Endothelial cell of umbilical vein (primary cell): ENCODE measurements at regions of chr15 and their contacts with region 1.

Region 1: GRCh38 chr15:38828031-38828532 is 263.5 kb upstream of the RASGRP1 start:
- DNase-seq: peak; percentile 100
- H3K4me3 ChIP-seq: no peak overlapping the region
- H3K27ac ChIP-seq: peak overlapping the region; percentile 100
- H3K4me1 ChIP-seq: peaks cover 59% of the 10 kb centered on the region
- H3K27me3 ChIP-seq: no peaks in the 10 kb centered on the region
- CTCF ChIP-seq: no peak
- POLR2A ChIP-seq: peak; percentile 65

Region 2: DNA sequence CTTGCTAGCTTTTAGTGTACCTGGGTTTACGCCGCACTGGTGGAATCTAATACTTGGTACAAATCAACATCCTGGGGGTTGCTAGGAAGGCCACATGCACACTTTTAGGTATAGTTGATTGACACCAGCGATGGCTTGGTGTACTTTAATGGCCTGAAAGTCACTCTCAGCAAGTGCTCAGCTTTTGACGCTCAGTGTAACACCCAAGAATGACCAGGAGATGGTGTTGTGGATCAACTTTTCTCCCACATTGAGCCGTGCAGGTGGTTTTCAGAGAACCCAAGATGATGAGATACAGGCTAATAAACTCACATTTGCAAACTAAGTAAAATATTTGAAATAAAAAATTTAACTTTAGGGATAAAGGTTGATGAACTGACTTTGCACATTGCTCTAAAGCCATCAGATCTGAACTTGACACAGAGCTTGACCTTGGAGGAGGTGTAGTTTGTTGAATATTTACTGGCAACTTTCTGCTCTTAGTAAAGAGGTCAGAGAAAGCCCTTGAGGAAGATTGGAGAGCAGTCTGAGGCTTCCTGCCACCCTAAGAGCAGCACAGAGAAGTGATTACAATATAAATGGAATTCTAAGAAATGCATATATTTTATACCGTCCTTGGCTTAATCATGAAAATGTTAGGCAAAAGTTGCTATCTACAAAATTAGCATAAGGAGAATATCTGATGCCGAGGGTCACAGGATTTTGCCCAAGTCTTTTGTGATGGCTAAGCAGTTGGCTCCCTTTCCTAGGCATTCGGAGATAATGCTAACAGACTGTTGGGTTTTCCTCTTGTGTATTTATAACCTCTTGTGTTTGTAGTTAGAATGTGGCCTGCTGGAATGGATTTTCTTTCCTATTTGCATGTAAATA is 120.0 kb before region 1 on chr15:
- CTCF ChIA-PET with region 1: interaction called, 12 read pairs
- POLR2A ChIA-PET with region 1: no interaction called
- dilution Hi-C with region 1: no loop called
- intact Hi-C with region 1: loop called (anchors 1 kb)
- DNase-seq: peak; percentile 87
- H3K4me3 ChIP-seq: no peak overlapping the region
- H3K27ac ChIP-seq: no peak overlapping the region
- H3K4me1 ChIP-seq: peaks cover 10% of the 10 kb centered on the region
- H3K27me3 ChIP-seq: no peaks in the 10 kb centered on the region
- CTCF ChIP-seq: peak; percentile 71 to 78
- POLR2A ChIP-seq: no peak

Region 3: DNA sequence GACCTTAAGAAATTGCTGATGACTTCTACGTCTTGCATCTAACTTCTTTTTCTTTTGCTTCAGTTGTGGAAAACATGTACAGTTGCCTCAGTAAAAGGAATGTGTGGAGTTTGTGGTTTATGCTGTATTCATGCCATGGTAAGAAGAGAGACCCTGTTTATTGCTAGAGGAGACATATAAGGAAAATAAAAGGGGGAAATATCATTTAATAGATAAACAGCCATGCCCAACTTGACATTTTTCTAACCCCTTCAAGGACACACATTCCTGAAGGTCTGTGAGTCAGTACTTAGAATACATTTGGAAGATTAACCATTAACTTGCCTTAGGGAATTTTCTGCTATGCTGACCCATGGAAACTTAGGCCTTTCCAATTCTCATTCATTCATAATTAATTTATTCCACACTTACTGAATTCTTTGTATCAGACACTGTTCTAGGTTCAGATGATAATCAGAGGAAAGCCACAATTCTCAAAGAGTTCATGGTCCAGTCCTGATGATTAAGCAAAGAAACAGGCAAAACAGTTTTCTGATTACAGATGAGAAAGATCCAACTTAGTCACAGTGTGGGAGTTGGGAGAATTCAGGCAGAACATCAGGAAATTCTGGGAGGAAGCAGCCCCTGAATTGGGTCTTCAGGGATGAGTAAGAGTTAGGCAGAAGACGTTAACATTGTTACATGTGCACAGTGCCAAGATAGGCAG is 66.3 kb after region 1 on chr15:
- CTCF ChIA-PET with region 1: interaction called, 5 read pairs
- POLR2A ChIA-PET with region 1: interaction called, 4 read pairs
- dilution Hi-C with region 1: no loop called
- intact Hi-C with region 1: loop called (anchors 1 kb)
- DNase-seq: peak; percentile 91
- H3K4me3 ChIP-seq: no peak overlapping the region
- H3K27ac ChIP-seq: peak overlapping the region; percentile 92
- H3K4me1 ChIP-seq: peaks cover 49% of the 10 kb centered on the region
- H3K27me3 ChIP-seq: no peaks in the 10 kb centered on the region
- CTCF ChIP-seq: no peak
- POLR2A ChIP-seq: no peak

Region 4: DNA sequence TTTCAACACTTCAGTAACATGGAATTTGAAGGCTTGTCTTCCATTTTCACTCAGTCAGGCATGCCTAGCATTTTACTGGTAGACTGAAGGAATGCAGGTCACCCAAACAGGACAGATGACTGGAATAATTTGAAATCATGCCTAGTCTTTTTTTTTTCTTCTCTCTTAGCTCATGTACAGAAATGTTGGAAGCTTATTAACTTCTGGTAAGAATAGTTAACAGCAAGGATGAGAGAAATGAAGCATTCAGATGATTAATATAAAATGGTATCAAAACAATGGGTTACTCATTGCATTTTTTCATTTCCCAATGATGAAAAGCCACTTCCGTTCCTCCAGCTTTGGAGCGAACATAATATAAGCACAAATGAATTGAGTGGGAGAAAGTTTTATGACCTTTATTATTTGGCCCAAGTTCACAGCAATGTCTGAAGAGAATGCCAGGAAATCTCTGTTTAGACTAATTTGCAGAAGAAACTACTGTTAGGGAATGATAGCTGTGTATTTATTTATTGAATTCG is 168.1 kb after region 1 on chr15:
- CTCF ChIA-PET with region 1: interaction called, 40 read pairs
- POLR2A ChIA-PET with region 1: interaction called, 21 read pairs
- dilution Hi-C with region 1: no loop called
- intact Hi-C with region 1: loop called (anchors 1 kb)
- DNase-seq: peak; percentile 96
- H3K4me3 ChIP-seq: no peak overlapping the region
- H3K27ac ChIP-seq: peak overlapping the region; percentile 92
- H3K4me1 ChIP-seq: peaks cover 51% of the 10 kb centered on the region
- H3K27me3 ChIP-seq: no peaks in the 10 kb centered on the region
- CTCF ChIP-seq: no peak
- POLR2A ChIP-seq: peak; percentile 35

Region 5: GRCh38 chr15:39095218-39095879 is 267.3 kb after region 1 on chr15:
- CTCF ChIA-PET with region 1: no interaction called
- POLR2A ChIA-PET with region 1: no interaction called
- dilution Hi-C with region 1: no loop called
- intact Hi-C with region 1: no loop called
- DNase-seq: no peak
- H3K4me3 ChIP-seq: no peak overlapping the region
- H3K27ac ChIP-seq: no peak overlapping the region
- H3K4me1 ChIP-seq: no peaks in the 10 kb centered on the region
- H3K27me3 ChIP-seq: no peaks in the 10 kb centered on the region
- CTCF ChIP-seq: no peak
- POLR2A ChIP-seq: no peak

Region 6: DNA sequence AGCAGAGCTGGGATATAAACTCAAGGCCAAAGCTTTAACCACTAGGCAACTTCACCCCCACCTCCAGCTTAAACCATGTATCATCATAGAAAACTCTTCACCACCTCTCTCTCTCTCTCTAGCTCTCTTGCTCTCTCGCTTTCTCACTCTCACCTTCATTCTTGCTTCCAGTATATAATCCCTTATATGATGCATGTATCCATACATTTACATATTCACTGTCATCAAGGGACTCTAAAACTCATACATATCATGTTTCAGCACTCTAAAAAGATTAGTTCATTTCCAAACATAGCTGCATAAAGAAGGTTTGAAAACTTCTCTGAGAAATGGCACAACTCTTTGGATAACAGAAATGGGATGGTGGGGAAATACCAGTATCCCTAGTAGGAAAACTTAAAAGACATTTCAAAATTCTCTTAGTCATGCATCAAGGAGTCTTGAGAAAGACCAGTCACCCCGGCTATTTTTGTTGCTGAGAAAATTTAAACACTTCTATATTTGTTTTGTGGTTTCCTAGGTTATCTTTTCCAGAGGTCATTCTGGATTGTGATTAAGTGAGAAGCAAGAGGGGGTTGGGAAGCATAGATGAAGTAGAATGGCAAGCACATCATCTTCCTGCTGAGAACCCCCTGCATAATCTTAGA is 305.0 kb after region 1 on chr15:
- CTCF ChIA-PET with region 1: interaction called, 3 read pairs
- POLR2A ChIA-PET with region 1: interaction called, 11 read pairs
- dilution Hi-C with region 1: loop called (anchors 25 kb)
- intact Hi-C with region 1: loop called (anchors 1 kb)
- DNase-seq: peak; percentile 64
- H3K4me3 ChIP-seq: no peak overlapping the region
- H3K27ac ChIP-seq: peak overlapping the region; percentile 48
- H3K4me1 ChIP-seq: peaks cover 53% of the 10 kb centered on the region
- H3K27me3 ChIP-seq: no peaks in the 10 kb centered on the region
- CTCF ChIP-seq: no peak
- POLR2A ChIP-seq: no peak

Region 7: GRCh38 chr15:39248204-39248603 is 420.1 kb after region 1 on chr15:
- CTCF ChIA-PET with region 1: no interaction called
- POLR2A ChIA-PET with region 1: interaction called, 3 read pairs
- dilution Hi-C with region 1: no loop called
- intact Hi-C with region 1: loop called (anchors 1 kb)
- DNase-seq: peak; percentile 99
- H3K4me3 ChIP-seq: peak overlapping the region in 1 of 3 experiments; percentile 0
- H3K27ac ChIP-seq: peak overlapping the region; percentile 98
- H3K4me1 ChIP-seq: peaks cover 72% of the 10 kb centered on the region
- H3K27me3 ChIP-seq: no peaks in the 10 kb centered on the region
- CTCF ChIP-seq: no peak
- POLR2A ChIP-seq: no peak